Heart right ventricle (tissue), 16 donors: ENCODE measurements at regions of chr22 and their contacts with region 1.

Region 1: GRCh38 chr22:25048659-25049647 is 96.4 kb downstream of the KIAA1671 start:
- DNase-seq: peak; percentile 63 to 65
- ATAC-seq: peak; percentile 70 to 83 (median 76)
- H3K4me3 ChIP-seq: no peak overlapping the region
- H3K27ac ChIP-seq: no peak overlapping the region
- H3K4me1 ChIP-seq: peaks cover 0 to 39% (median 6%) of the 10 kb centered on the region in 9 donors
- H3K27me3 ChIP-seq: no peaks in the 10 kb centered on the region
- CTCF ChIP-seq: peak; percentile 79 to 96 (median 93)

Region 2: GRCh38 chr22:24938741-24939341 is 110.1 kb before region 1 on chr22:
- intact Hi-C with region 1: loop called in 2 of 10 experiments (anchors 5 kb)
- DNase-seq: peak in 1 of 2 donors; percentile 20
- ATAC-seq: peak in 6 of 8 donors; percentile 11 to 57 (median 43)
- H3K4me3 ChIP-seq: no peak overlapping the region
- H3K27ac ChIP-seq: no peak overlapping the region
- H3K4me1 ChIP-seq: no peaks in the 10 kb centered on the region
- H3K27me3 ChIP-seq: peaks cover 0 to 4% (median 0%) of the 10 kb centered on the region in 7 donors
- CTCF ChIP-seq: peak; percentile 42 to 82 (median 77)

Region 3: DNA sequence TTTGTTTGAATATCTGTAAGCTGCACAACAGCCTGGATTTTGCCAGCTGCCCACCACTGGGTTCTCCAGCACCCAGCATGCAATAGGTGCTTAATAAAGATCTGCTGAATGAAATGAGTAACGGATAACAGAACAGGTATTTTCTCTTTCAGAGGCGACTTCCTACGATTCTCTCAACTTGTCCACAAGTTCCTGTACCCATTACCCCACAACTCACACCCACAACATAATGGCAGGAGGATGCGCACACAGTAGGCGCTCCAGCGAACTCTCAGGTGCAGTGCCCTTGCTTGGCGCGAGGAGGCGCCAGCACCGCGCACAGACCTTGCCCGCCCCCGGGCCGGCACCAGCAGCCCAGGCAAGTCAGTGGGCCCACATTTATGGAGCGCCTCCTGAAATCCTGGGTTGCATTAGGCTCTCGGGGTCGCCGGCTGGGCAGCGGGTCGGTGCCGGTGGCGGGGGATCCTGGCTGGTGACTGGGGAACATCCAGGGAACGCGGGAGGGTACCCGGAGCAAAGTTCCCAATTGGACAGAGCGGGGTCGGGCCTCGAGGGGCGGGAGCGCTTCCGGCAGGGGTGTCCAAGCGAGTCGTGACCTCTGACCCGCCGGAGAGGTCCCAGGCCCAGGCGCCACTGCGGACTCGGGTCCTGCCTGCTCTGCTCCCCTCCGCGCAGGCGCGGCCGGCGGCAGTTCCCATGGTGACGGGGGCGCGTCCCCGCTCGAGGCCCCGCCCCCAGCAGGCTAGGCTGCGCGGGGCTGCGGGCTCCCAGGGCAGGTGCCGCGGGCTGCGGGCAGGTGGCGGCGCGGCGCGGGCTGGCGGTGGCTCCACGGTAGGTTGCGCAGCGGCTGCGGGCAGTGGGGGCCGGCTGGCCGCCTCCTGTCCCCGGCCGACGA is 96.8 kb before region 1 on chr22 and contains the start of gene KIAA1671:
- intact Hi-C with region 1: loop called (anchors 1 to 5 kb)
- DNase-seq: peak; percentile 84 to 91
- ATAC-seq: peak; percentile 95 to 97 (median 96)
- H3K4me3 ChIP-seq: peak within 1 kb of the TSS; percentile 56 to 98 (median 78)
- H3K27ac ChIP-seq: peak within 1 kb of the TSS; percentile 34 to 94 (median 83)
- H3K4me1 ChIP-seq: peaks cover 5 to 49% (median 19%) of the 10 kb centered on the region in 9 donors
- H3K27me3 ChIP-seq: peaks cover 0 to 26% (median 0%) of the 10 kb centered on the region in 7 donors
- CTCF ChIP-seq: peak in 8 of 9 donors; percentile 95 to 100 (median 99)
- total RNA-seq, gene KIAA1671: 8.9 to 26.2 (median 14.0) TPM